ENCODE measurements at regions of chr15 and their contacts with region 1.

Region 1: DNA sequence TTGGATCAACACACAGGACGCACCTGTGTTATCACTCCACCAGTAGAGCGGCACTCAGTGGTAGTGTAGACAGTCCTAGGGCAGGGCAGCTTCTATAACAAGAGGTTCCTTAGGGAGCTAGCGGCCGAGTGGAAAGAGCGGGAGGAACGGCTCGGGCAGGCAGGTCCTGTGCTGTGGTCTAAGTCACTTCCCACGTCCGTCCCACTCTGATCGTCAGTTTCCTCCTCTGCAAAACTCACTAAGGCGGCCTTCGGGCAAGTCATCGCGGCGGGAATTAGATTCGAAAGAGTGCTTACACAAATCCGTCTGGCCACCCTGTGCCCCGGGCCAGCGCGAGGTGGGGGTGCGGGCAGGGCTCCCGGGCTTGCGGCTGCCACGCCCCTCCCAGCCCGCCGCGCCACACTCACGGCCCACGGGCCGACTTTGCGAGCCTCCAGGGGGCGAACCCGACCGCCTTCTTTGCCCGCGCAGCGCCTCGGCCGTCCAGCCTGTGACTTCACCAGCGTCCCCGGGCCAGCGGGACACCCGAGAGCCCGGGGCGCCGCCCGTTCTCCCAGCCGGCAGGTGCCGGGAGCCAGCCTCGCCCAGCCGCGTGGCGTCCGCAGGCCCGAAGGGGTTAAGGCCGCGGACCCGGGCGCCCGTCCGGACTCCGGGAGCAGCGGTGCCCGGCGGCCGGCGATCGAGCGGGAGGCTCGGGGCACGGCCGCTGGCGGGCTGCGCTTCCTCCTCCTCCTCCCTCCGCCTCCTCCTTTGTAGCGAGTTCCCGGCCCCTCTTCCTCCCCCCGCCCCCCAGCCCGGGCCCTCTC is 416 bp upstream of the CORO2B start:
- DNase-seq: peak in 1 of 2 donors; percentile 89
- H3K4me3 ChIP-seq: peak overlapping the region; percentile 60 to 82
- H3K27ac ChIP-seq: peak overlapping the region; percentile 66 to 81
- H3K4me1 ChIP-seq: peaks cover 3 to 5% of the 10 kb centered on the region in 2 donors
- H3K27me3 ChIP-seq: no peaks in the 10 kb centered on the region
- CTCF ChIP-seq: peak; percentile 30 to 76 (median 72)

Region 2: DNA sequence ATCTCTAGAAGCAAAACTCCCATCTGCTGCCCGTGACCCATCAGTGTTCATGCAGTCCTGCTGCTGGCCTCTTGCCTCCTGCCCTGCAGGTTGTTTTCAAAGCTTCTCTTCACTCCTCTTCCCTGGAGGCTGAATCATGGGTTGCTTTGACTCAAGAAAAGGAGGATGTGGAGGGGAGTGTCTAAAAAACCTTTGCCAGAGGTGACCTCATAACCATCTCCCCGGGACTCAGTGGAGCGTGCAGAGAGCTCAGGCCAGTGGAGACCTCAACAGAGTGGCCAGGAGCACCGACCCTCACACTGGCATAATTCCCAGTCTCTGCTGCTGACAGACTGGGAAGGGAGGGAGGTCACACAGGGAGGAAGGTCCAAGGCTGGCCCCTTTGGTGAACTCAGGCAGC is 85.5 kb before region 1 on chr15:
- intact Hi-C with region 1: no loop called
- DNase-seq: no peak
- H3K4me3 ChIP-seq: no peak overlapping the region
- H3K27ac ChIP-seq: peak overlapping the region; percentile 29 to 50
- H3K4me1 ChIP-seq: peaks cover 0 to 11% of the 10 kb centered on the region in 2 donors
- H3K27me3 ChIP-seq: no peaks in the 10 kb centered on the region
- CTCF ChIP-seq: peak in 1 of 3 experiments; percentile 10

Region 3: GRCh38 chr15:68526269-68526668 is 52.1 kb before region 1 on chr15:
- intact Hi-C with region 1: no loop called
- DNase-seq: no peak
- H3K4me3 ChIP-seq: no peak overlapping the region
- H3K27ac ChIP-seq: peak overlapping the region in 1 of 2 donors; percentile 20
- H3K4me1 ChIP-seq: peaks cover 0 to 11% of the 10 kb centered on the region in 2 donors
- H3K27me3 ChIP-seq: no peaks in the 10 kb centered on the region
- CTCF ChIP-seq: no peak

Region 4: DNA sequence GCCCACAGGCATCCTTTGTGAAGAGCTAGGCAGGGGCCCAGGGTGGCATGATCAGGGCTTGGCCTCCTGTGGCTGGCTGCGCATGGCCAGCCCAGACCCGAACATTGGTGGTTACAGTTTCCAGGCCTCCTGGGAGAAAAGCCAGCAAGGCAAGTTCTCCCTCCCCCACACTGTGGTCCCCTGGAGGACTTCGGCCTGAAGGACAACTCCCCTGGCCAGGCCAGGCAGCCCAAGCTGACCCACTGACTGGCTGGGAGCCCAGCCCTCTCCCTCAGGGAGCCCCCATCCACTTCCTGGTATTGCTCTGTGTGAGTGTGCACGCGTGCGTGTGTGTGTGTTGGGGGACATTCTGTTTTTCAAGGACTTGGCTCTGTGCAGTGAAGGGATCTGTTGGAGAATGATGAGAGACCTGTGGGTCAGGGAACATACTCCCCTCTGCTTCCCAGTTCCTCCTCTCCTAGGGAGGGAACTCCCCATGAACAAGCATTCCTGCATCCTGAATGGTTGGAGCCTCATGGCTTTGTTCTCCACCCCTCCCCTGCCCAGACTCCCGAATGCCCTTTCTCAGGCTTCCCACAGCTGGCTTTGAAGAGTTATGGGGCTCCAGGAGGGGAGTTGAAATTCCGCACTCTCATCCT is 29.9 kb after region 1 on chr15:
- intact Hi-C with region 1: loop called (anchors 2 kb)
- DNase-seq: peak; percentile 28 to 88
- H3K4me3 ChIP-seq: no peak overlapping the region
- H3K27ac ChIP-seq: peak overlapping the region; percentile 74 to 80
- H3K4me1 ChIP-seq: peaks cover 15 to 27% of the 10 kb centered on the region in 2 donors
- H3K27me3 ChIP-seq: no peaks in the 10 kb centered on the region
- CTCF ChIP-seq: no peak

Region 5: DNA sequence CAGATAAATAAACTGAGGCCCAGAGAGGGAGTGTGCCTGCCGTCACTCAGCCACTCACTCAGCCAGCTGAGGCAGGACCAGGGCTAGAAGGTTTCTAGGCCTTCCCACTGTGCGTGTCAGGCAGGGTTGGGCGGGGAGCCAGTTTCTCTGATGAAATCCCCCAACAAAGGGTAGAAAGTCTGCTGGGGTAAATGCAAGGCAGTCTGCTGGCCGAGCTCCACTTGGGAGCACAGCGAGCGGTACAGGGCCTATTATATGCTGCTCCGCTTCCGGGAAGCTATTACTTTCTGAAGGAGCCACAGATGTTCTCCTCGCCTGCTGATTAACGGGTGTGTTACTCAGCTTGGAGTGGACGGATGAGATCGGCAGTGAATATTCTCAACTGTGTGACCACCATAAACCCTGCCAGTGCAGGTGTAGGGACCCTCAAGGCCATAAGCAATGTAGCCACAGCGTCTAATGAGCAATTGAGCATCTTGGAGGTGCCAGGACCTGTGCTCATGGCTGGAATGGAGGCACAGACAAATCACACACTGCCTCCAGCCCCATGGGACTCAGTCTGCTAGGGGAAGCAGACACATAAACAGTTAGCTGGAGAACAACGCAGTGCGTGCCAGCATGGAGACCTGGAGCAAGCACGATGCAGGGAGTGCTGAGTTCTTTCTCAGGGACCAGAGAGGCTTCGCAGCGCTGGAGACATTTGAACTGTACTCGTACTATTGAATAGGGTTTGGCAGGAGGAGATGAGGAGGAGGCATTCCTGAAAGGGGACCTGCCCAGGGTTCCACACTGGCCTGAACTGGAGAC is 42.5 kb after region 1 on chr15:
- intact Hi-C with region 1: loop called (anchors 5 kb)
- DNase-seq: peak in 1 of 2 donors; percentile 93
- H3K4me3 ChIP-seq: peak overlapping the region in 1 of 2 donors; percentile 20
- H3K27ac ChIP-seq: peak overlapping the region; percentile 58 to 67
- H3K4me1 ChIP-seq: peaks cover 0 to 14% of the 10 kb centered on the region in 2 donors
- H3K27me3 ChIP-seq: no peaks in the 10 kb centered on the region
- CTCF ChIP-seq: no peak

Region 6: DNA sequence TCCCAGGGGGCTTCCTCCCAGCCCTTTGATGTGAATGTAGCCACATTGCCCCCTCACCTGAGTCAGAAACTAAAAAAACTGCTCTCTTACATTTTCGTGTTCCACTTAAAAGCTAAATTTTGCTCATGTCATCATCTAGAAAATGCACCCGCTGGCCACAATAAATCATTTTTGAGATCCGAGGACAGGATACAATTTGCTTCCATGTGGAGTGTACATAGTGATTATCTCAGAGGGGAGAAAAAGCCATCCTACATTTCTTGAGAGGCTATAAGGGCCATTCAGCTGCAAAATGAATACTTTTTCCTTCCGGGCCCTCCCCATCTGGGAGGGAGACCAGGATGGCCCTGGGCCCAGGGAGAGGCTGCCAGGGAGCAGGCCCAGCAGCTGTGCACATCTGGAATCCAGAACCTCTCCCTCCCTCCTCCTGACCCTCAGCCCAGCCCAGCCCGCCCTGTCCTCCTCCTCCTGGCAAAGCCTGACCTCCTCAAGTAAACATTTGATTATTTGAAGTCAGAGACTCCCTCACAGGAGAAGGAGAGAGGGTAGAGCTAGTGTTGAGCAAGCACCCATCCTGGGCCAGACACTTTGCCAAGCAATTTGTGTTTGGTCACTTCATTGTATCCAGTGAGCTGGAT is 59.5 kb after region 1 on chr15:
- intact Hi-C with region 1: loop called (anchors 5 kb)
- DNase-seq: no peak
- H3K4me3 ChIP-seq: no peak overlapping the region
- H3K27ac ChIP-seq: peak overlapping the region; percentile 54 to 66
- H3K4me1 ChIP-seq: peaks cover 0 to 22% of the 10 kb centered on the region in 2 donors
- H3K27me3 ChIP-seq: no peaks in the 10 kb centered on the region
- CTCF ChIP-seq: no peak

Region 7: DNA sequence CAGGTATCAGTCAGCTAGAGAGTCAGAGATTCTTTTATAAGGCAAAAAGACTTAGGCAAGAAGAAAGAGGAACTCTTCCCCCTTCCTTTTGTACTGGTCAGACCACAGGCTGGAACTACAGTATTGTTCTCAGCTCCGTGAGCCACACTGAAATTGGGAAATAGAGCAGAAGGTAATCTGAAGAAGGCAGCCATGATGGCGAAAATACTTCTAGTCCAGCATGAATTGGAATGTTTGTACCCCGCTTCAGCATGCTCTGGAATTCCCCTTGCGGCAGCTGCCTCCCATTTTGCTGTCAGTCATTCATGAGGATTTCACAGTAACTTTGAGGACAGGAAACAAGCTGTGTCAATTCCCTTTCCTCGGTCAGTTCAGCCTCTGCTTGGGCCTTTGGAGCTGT is 96.6 kb after region 1 on chr15:
- intact Hi-C with region 1: loop called (anchors 1 kb)
- DNase-seq: no peak
- H3K4me3 ChIP-seq: no peak overlapping the region
- H3K27ac ChIP-seq: no peak overlapping the region
- H3K4me1 ChIP-seq: no peaks in the 10 kb centered on the region
- H3K27me3 ChIP-seq: no peaks in the 10 kb centered on the region
- CTCF ChIP-seq: no peak

Region 8: DNA sequence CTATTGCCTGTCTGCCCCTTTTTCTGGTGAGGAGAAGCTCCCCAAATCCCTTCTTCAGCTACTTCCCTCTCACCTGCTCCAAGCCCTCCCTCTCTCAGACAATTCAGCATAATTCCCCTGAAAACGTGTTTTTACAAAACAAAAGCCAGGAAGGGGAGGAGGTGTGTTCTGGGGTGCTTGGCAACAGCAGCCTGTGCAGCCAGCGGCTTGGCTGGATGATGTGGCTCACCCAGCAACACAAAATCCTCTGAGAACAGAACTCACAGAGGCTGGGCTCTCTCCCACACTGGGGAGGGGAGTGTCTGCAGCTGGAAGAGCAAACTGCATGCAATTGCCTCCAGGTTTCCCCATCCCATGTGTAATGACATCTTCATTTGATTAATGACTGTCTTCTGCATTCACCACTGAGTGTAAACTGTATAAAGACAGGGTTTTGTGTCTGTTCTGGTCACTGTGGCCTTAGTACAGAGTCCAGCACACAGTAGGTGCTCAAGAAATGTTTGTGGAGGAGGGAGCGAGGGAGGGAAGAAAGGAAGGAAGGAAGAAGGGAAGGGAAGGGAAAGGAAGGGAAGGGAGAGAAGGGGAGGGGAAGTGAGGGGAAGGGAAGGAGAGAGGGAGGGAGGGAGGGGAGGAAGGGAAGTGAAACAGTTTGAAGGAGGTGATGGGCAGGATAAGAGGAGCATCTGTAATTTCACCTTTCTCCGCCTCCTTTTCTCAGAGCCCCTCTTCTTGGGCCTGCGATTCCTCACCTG is 512.0 kb after region 1 on chr15:
- intact Hi-C with region 1: no loop called
- DNase-seq: no peak
- H3K4me3 ChIP-seq: no peak overlapping the region
- H3K27ac ChIP-seq: no peak overlapping the region
- H3K4me1 ChIP-seq: no peaks in the 10 kb centered on the region
- H3K27me3 ChIP-seq: no peaks in the 10 kb centered on the region
- CTCF ChIP-seq: no peak

Measured in ascending aorta (tissue), 2 donors.